HEK293 (cell line): ENCODE measurements at regions of chr12 and their contacts with region 1.

Region 1: DNA sequence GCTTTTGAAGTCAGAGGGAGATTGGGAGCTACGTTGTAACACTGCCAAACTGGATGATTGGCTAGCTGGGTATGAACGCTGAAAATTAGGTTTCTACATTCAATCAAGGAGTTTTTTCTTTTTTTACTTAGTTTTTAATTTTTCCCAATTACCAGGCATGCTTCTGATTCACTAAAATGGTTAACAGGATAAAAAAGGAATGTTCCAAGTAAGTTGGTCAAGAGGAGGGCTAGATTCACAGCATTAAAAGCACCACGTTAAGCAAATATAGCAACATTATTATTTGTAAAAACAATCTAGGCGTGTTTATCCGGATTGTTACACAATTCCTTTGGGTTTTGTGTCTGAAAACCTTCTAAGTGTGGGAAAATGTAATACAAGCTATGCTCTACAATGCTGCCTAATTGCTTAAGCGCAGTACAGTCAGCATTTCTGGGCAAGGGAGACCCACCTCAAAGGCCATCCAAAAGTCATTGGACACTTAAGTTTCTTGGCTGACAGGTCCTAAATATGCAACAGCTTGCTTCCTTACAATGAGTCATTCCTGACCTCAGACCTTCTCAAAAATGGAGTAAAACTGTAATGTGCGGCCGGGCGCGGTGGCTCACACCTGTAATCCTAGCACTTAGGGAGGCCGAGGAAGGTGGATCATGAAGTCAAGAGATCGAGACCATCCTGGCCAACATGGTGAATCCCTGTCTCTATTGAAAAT is 1.2 kb downstream of the RPLP0 start:
- H3K4me3 ChIP-seq: peak overlapping the region; percentile 94
- H3K27ac ChIP-seq: peak overlapping the region; percentile 60
- H3K4me1 ChIP-seq: peaks cover 4% of the 10 kb centered on the region
- CTCF ChIP-seq: no peak

Region 2: GRCh38 chr12:120116792-120117651 is 82.7 kb before region 1 on chr12:
- CTCF ChIA-PET with region 1: interaction called, 13 read pairs
- POLR2A ChIA-PET with region 1: interaction called, 33 read pairs
- H3K4me3 ChIP-seq: peak overlapping the region; percentile 80
- H3K27ac ChIP-seq: peak overlapping the region; percentile 86
- H3K4me1 ChIP-seq: peaks cover 9% of the 10 kb centered on the region
- CTCF ChIP-seq: no peak

Region 3: GRCh38 chr12:120181991-120182631 is 17.6 kb before region 1 on chr12:
- CTCF ChIA-PET with region 1: interaction called, 7 read pairs
- POLR2A ChIA-PET with region 1: interaction called, 59 read pairs
- H3K4me3 ChIP-seq: no peak overlapping the region
- H3K27ac ChIP-seq: no peak overlapping the region
- H3K4me1 ChIP-seq: no peaks in the 10 kb centered on the region
- CTCF ChIP-seq: no peak

Region 4: DNA sequence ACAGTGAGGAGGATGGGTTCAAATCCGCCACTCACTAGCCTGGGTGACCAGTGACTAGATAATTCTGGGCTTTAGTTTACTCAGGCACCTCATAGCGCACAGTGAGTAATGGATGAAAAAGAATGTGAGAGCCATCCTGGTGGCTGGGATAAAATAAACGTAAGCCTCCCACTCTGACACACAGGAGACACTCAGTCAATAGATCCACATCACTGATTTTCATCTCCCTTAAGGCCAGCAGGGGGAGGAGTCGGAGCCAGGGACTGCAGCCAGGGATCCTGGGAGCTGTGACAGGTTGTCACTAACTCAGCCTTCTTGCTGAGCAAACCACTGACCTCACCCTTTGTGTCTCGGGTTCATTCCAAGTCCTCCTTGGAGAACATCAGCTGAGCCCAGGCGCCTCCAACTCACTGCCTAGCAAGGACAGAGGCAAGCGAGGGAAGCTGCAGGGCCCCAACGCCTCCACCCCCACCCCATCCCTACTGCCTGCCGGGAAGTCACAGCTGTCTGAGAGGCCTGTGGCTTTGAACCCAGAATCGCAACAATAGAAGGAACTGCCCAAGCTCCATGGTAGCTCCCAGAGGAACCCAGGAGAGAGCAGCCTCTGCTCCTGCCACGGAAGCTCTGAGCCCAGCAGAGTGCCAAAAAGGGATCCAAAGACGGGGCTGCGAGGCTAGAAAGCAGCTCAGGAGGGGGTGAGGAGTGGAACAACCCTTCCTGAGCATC is 35.1 kb after region 1 on chr12:
- CTCF ChIA-PET with region 1: interaction called, 62 read pairs
- POLR2A ChIA-PET with region 1: interaction called, 163 read pairs
- H3K4me3 ChIP-seq: no peak overlapping the region
- H3K27ac ChIP-seq: peak overlapping the region; percentile 11; the same call in 1 of the 2 replicates
- H3K4me1 ChIP-seq: peaks cover 36% of the 10 kb centered on the region
- CTCF ChIP-seq: peak; percentile 48

Region 5: GRCh38 chr12:120265473-120266179 is 65.9 kb after region 1 on chr12 and contains the start of gene PXN:
- CTCF ChIA-PET with region 1: interaction called, 6 read pairs
- POLR2A ChIA-PET with region 1: interaction called, 98 read pairs
- H3K4me3 ChIP-seq: peak within 1 kb of the TSS; percentile 90
- H3K27ac ChIP-seq: peak within 1 kb of the TSS; percentile 65; the same call in 1 of the 2 replicates
- H3K4me1 ChIP-seq: peaks cover 4% of the 10 kb centered on the region; the same call in 1 of the 2 replicates
- CTCF ChIP-seq: peak; percentile 69

Region 6: DNA sequence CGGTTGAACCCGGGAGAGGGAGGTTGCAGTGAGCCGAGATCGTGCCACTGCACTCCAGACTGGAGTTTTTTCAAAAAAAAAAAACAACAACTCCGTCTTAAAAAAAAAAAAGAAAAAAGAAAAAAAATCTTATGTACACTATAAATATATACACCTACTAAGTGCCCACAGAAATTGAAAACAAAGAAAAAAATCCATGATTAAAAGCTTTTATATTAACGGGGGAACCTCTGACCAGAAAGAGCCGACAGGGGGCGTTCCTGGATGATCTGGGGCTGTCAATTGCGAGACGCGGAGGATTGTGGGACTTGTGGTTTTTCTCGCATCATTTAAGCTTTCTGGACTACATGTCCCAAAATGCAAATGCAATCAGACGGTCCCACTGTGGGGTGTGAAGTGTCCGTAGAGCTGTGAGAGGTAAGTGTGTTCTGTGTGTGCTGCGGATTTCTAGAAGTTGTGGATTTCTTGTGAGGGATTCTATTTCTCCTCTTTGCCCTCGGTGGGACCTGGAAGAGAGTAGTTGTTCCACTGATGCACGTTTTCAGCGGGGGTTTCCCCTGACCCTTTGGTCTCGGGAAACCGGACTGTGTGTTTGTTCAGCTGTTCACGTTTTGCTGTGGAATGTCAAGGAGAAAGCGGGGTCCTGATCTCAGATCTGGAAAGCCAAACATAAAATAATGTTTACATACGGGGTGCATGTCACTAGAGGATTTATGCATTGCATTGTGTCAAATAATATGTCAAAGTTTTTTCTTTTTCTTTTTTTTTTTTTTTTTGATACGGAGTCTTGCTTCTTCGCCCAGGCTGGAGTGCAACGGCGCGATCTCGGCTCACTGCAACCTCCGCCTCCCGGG is 102.4 kb after region 1 on chr12 and contains the start of gene SIRT4:
- CTCF ChIA-PET with region 1: no interaction called
- POLR2A ChIA-PET with region 1: interaction called, 14 read pairs
- H3K4me3 ChIP-seq: peak within 1 kb of the TSS; percentile 51
- H3K27ac ChIP-seq: peak within 1 kb of the TSS; percentile 40; the same call in 1 of the 2 replicates
- H3K4me1 ChIP-seq: no peaks in the 10 kb centered on the region
- CTCF ChIP-seq: peak; percentile 82

Region 7: DNA sequence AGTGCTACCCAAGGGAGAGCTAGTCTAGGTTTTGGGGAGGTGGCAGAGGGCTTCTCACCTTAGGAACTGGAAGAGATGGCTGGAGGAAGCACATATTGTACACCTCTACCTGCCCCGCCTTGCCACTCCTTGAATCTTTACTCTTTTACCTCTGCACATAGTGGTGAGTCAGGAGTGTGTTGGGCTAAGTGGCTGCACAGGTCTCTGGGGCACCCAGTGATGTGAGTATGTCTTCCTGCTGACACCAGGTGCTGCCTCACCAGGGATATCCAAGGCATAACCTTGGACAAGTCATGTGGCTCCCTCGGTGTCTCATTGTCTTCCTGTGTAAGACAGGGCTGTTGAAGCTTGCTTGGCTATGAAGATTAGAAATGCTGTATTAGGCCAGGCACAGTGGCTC is 420.9 kb after region 1 on chr12:
- CTCF ChIA-PET with region 1: no interaction called
- POLR2A ChIA-PET with region 1: no interaction called
- H3K4me3 ChIP-seq: no peak overlapping the region
- H3K27ac ChIP-seq: no peak overlapping the region
- H3K4me1 ChIP-seq: no peaks in the 10 kb centered on the region
- CTCF ChIP-seq: no peak